ENCODE measurements at regions of chr14 and their contacts with region 1.

Region 1: DNA sequence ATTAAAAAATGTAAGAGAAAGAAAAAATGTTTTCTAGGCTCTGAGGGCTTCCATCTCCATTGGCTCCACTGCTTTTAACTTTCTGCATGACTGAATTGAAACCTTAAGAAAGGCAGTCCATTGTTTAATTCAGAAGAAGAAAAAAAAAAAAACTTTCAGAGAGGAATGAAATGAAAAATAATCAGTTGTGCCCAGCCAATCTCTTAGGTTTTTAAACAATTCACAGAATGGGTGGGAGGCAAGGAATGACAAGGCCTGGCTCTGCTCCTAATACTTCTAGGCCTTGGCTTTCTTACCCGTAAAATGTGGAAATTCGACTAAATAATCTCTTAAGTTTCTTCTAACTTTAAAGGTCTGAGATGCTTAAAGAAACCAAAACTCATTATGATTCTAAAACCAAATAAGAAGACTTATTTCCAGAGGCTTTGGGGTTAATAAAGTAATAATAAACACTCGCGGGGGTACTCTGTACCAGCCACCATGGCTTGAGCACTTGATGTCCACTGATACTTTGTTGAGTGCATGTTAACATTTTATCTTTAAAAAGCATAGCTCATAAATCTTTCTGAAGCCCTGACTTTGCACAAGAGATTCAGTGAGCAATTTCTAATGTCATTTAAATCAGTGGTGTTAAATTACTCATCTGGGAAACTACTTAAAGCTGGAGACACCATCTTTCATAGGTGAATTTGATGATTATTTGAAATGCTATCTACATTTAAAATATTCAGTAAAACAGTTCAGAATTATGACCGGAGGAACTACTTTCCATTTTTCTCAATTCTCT is 49.6 kb downstream of the STON2 start:
- DNase-seq: no peak
- ATAC-seq: no peak
- H3K4me3 ChIP-seq: no peak overlapping the region
- H3K4me1 ChIP-seq: no peaks in the 10 kb centered on the region
- CTCF ChIP-seq: no peak

Region 2: DNA sequence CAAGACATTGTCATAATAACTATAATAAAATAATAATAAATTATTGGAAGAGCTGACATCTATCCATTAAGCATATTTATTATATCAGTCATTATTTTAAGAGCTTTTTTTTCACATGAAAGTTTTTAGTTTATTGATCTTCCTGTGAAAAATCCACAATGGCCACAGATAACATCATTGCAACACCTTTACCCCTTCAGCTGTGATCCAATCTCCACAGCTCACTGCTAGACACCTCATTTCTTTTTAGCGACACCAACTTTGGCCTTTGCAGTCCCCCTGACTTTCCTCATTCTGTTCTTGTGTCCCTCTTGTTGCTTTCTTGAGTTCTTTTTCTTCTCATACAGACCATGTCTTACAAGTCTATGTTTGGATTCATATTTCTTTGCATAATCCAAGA is 17.8 kb before region 1 on chr14:
- intact Hi-C with region 1: loop called in 1 of 2 experiments (anchors 1 kb)
- DNase-seq: no peak
- ATAC-seq: no peak
- H3K4me3 ChIP-seq: no peak overlapping the region
- H3K4me1 ChIP-seq: no peaks in the 10 kb centered on the region
- CTCF ChIP-seq: no peak